PC-9 (cell line): ENCODE measurements at regions of chr2 and their contacts with region 1.

Region 1: DNA sequence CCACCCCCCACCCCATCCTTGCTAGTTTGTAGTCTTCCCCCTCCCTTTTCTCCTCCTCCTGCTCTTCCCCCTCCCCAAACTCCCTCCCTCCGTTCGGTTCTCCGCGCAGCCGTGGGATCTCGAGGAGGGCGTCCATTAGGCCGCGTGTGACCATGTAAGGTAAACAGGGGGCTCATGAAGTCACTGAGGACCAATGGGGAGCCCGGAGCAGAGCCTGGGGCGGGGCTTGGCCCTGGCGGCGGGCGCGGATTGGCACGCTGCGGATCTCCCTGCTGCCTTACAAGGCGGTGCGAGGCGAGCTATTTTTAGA is 246 bp upstream of the KLF7 start:
- DNase-seq: peak; percentile 93 to 96
- H3K4me3 ChIP-seq: peak overlapping the region; percentile 87
- H3K27ac ChIP-seq: peak overlapping the region; percentile 93
- H3K4me1 ChIP-seq: peaks cover 29% of the 10 kb centered on the region
- H3K27me3 ChIP-seq: no peaks in the 10 kb centered on the region
- CTCF ChIP-seq: no peak

Region 2: DNA sequence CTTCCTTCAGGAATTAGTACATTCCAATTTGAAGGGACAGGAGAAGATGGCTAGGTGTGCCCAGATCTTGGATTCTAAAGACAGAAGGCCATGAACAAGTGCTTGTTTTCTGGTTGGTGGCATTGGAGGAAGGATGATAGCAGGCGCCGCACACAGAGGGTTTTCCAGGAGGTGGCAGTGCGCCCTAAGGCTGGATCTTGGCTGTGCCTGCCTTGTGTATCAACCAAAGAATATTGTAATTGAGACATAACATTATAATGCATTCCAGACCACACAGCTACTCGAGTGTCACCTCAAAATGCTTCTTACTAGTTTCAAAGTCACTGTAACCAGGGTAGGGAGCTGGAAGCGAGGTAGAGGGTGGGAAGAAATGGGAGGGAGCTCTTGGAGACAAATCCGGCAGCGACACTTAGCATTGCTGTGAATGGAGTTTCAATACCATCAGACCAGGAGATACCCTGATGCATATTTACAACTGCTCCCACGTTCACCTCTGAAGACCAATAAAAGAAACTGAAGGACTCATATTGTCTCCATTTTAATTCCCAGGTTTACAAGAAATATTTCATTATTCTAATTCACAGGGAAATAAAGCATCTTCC is 184.2 kb before region 1 on chr2:
- CTCF ChIA-PET with region 1: no interaction called
- POLR2A ChIA-PET with region 1: interaction called, 3 read pairs
- intact Hi-C with region 1: loop called (anchors 2 kb)
- DNase-seq: peak in 1 of 2 experiments; percentile 56
- H3K4me3 ChIP-seq: no peak overlapping the region
- H3K27ac ChIP-seq: no peak overlapping the region
- H3K4me1 ChIP-seq: peaks cover 32% of the 10 kb centered on the region
- H3K27me3 ChIP-seq: no peaks in the 10 kb centered on the region
- CTCF ChIP-seq: peak; percentile 72

Region 3: GRCh38 chr2:207238831-207239701 is 73.1 kb after region 1 on chr2:
- CTCF ChIA-PET with region 1: no interaction called
- POLR2A ChIA-PET with region 1: interaction called, 7 read pairs
- intact Hi-C with region 1: loop called (anchors 1 kb)
- DNase-seq: peak; percentile 33 to 47
- H3K4me3 ChIP-seq: no peak overlapping the region
- H3K27ac ChIP-seq: peak overlapping the region; percentile 32; the same call in 1 of the 2 replicates
- H3K4me1 ChIP-seq: peaks cover 6% of the 10 kb centered on the region; the same call in 1 of the 2 replicates
- H3K27me3 ChIP-seq: no peaks in the 10 kb centered on the region
- CTCF ChIP-seq: no peak

Region 4: GRCh38 chr2:207334624-207335371 is 168.8 kb after region 1 on chr2:
- CTCF ChIA-PET with region 1: interaction called, 5 read pairs
- POLR2A ChIA-PET with region 1: interaction called, 7 read pairs
- intact Hi-C with region 1: loop called (anchors 5 kb)
- DNase-seq: peak; percentile 57 to 82
- H3K4me3 ChIP-seq: peak overlapping the region; percentile 48
- H3K27ac ChIP-seq: peak overlapping the region; percentile 91
- H3K4me1 ChIP-seq: peaks cover 38% of the 10 kb centered on the region
- H3K27me3 ChIP-seq: no peaks in the 10 kb centered on the region
- CTCF ChIP-seq: no peak

Region 5: DNA sequence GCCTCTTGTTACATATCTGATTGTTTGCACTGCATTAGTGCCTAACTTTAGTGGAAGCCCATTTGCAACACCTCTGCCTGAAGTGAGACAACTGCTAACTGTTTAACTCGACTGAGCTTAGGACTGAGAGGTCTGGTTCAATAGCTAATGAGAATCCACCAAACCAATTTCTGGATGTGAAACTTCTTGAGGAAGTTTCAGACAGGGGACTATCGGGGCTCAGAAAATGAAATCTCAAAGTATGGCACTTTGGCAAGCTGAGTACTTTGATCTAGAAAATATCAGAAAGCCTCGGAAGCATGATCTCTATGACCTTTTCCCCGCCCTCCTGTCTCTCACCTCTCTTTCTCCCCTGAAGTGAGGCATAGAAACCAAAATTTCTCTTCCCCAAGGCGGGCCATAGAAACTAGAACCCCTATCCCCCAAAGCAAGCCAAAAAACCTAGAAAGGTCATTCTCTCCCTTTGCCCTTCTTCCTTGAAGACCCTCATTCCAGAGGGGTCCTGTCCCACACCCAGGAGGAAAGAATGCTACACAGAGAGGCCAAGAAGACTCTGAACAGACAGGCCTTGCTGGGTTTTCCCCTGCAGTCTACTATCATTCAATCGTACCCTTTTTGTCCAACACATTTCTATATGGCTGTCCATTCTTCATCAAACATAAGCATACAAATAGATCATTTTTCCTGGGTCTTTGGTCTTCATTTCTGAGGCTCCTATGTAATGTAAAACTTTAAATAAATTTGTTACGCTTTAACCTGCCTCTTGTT is 294.2 kb after region 1 on chr2:
- CTCF ChIA-PET with region 1: no interaction called
- POLR2A ChIA-PET with region 1: interaction called, 8 read pairs
- intact Hi-C with region 1: loop called (anchors 5 kb)
- DNase-seq: no peak
- H3K4me3 ChIP-seq: no peak overlapping the region
- H3K27ac ChIP-seq: no peak overlapping the region
- H3K4me1 ChIP-seq: no peaks in the 10 kb centered on the region
- H3K27me3 ChIP-seq: no peaks in the 10 kb centered on the region
- CTCF ChIP-seq: no peak